Left colon (tissue), 2 donors: ENCODE measurements at regions of chr1 and their contacts with region 1.

Region 1: DNA sequence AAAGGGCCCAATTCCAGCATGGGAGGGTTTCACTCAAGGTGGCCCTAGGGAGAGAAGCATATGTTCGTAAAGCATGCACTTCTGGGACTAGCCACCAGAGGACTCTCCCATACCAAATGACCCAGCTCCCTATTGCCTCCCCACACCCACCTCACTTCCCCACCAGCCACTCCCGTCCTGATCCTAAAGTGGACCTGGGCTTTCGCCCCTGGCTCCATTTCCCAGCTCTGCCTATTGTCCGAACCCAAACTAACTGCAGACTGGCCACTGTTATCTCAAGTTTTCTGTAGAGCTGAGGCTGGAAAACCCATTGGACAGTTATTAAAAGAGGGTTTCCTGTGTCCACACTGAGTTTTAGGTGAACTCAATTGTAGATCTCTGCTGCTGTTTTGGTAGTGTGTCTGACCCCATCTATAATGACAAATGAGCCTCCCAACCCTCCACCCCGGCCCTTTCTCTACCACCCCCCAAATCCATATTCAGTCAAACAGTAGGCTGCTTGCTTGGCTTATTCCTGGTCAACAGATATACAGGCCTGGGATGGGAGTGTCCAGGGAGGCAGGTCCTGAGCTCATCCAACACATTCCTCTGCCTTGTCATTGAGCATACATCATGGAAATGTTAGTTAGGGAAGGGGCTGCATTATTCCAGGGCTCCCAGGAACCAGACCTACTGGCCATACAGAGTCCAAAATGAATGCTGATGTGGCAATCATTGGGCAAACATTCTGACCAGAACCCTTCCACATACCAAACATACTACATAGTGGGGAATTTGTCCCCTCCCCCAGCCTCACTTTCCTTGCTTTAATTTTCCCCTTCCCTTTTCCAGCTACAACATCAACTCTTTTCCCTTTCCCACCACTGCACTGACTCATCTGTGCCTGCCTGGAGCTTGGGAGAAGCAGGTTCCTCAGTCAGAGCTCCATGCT is 59.2 kb downstream of the ABCA4 start:
- DNase-seq: peak; percentile 54 to 73
- ATAC-seq: peak; percentile 80

Region 2: DNA sequence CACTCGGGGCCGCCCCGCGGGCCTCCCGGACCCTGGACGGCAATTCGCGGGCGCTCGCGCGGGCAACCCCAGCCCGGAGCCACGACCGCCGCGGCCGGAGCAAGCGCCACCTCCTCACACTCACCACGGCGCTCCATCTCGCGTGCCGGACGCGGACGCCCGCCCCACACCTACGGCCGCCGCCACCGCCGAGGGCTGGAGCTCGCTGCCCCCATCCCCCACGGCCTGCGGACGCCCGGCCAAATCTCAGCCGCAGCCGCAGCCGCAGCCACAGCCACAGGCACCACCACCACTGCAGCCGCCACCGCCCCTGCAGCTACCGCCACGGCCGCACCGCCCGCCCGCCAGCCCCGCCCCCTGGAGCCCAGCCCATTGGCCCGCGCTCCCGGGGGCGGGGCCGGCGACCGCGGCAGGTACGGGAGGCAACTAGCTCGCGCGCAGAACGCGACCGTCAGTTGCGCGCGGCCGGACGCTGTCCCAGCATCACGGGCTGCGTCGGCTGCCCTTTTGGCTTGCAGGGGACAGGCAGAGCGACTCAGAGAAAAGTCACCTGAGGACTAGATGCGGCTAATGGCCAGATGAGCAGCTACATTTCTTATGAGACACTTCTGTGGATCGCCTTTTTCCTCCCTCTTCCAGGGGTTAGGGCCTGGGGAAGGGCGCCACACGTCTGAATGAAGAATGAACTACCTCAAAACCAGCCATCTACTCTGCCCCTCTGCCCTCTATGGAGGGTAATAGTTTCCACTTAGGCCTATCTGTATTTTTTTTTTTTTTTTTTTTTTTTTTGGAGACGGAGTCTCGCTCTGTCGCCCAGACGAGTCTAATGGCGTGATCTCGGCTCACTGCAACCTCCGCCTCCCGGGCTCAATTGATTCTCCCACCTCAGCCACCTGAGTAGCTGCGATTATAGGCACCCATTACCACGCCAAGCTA is 175.8 kb after region 1 on chr1 and contains the start of gene ARHGAP29:
- intact Hi-C with region 1: loop called in 1 of 2 experiments (anchors 5 kb)
- DNase-seq: peak; percentile 78 to 89
- ATAC-seq: peak; percentile 99
- total RNA-seq, gene ARHGAP29: 3.8 to 6.3 TPM

Region 3: GRCh38 chr1:94335950-94336349 is 274.2 kb after region 1 on chr1:
- intact Hi-C with region 1: loop called in 1 of 2 experiments (anchors 5 kb)
- DNase-seq: peak; percentile 68 to 69
- ATAC-seq: peak; percentile 98

Region 4: GRCh38 chr1:94463765-94464330 is 402.1 kb after region 1 on chr1:
- intact Hi-C with region 1: loop called in 1 of 2 experiments (anchors 10 kb)
- DNase-seq: no peak
- ATAC-seq: peak; percentile 88